ENCODE measurements at regions of chr11 and their contacts with region 1.

Region 1: DNA sequence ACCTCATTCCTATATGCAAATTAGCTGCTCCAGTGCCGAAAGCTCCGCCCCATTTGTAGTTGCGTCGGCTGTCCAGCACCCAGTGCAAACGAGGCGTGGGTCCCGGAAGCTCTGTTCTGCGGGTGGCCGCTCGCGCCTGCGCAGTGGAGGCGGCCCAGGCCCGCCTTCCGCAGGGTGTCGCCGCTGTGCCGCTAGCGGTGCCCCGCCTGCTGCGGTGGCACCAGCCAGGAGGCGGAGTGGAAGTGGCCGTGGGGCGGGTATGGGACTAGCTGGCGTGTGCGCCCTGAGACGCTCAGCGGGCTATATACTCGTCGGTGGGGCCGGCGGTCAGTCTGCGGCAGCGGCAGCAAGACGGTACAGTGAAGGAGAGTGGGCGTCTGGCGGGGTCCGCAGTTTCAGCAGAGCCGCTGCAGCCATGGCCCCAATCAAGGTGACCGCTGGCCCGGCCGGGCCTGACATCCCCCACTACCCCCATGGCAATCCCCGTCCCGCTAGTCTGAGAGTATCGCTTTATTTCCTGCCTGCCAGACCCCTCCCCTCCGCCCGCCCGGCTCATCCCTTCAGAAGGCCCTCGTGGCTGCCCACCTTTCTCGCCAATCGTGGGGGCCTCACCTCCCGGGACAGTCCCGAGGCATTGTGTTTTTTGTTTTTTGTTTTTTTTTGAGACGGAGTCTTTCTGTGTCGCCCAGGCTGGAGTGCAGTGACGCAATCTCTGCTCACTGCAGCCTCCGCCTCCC is at the start of gene PRDX5:
- DNase-seq: peak; percentile 97
- H3K4me3 Mint-ChIP-seq: peak within 1 kb of the TSS; percentile 98
- H3K27ac Mint-ChIP-seq: peak within 1 kb of the TSS; percentile 99
- H3K4me1 Mint-ChIP-seq: peaks cover 29% of the 10 kb centered on the region
- H3K27me3 Mint-ChIP-seq: no peaks in the 10 kb centered on the region
- CTCF ChIP-seq: no peak
- total RNA-seq, gene PRDX5: 165 TPM in 2 replicates

Region 2: GRCh38 chr11:64074239-64074638 is 243.9 kb before region 1 on chr11:
- CTCF ChIA-PET with region 1: no interaction called
- intact Hi-C with region 1: no loop called
- DNase-seq: no peak
- H3K4me3 Mint-ChIP-seq: no peak overlapping the region
- H3K27ac Mint-ChIP-seq: no peak overlapping the region
- H3K4me1 Mint-ChIP-seq: no peaks in the 10 kb centered on the region
- H3K27me3 Mint-ChIP-seq: peaks cover 3% of the 10 kb centered on the region
- CTCF ChIP-seq: no peak

Region 3: DNA sequence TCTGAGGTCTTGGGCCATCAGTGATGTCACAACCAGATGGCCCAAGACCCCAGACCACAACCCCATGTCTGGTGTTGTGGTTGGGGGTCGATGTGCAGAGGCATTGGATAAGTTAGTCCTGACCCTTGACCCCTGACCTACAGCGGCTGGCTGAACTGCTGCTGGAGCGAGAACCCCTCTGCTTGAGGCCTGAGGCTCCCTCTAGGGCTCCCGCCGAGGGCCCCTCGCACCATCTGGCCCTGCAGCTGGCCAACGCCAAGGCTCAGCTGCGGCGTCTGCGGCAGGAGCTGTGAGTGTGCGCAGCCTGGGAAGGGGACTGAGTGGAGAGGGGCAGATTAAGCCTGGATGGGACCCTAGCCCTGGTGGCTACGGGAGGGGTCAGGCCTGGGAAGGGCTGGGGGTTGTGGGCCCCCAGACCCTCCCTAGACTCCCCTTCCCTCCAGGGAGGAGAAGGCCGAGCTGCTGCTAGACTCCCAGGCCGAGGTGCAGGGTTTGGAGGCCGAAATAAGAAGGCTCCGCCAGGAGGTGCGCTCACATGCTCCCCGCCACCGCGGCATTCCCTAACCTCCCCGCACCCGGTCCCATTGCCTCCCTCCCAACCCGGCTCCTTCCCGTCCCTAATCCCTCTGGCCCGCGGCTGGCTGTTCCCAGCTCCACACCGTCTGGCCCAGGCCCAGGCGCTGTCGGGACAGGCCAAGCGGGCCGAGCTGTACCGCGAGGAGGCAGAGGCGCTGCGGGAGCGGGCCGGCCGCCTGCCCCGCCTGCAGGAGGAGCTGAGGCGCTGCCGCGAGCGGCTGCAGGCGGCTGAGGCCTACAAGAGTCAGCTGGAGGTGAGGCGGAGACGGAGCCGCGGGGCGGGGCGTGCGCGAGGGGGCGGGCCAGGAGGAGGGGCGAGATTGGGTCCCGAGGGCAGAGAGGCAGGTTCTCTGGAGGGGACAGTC is 24.0 kb after region 1 on chr11:
- CTCF ChIA-PET with region 1: interaction called, 27 read pairs
- intact Hi-C with region 1: no loop called
- DNase-seq: peak; percentile 96
- H3K4me3 Mint-ChIP-seq: peak overlapping the region; percentile 52
- H3K27ac Mint-ChIP-seq: no peak overlapping the region
- H3K4me1 Mint-ChIP-seq: peaks cover 3% of the 10 kb centered on the region
- H3K27me3 Mint-ChIP-seq: no peaks in the 10 kb centered on the region
- CTCF ChIP-seq: peak; percentile 36

Region 4: GRCh38 chr11:65945430-65945911 is 1627.3 kb after region 1 on chr11 and contains the start of gene TSGA10IP:
- CTCF ChIA-PET with region 1: no interaction called
- intact Hi-C with region 1: no loop called
- DNase-seq: no peak
- H3K4me3 Mint-ChIP-seq: no peak within 1 kb of the TSS
- H3K27ac Mint-ChIP-seq: no peak within 1 kb of the TSS
- H3K4me1 Mint-ChIP-seq: no peaks in the 10 kb centered on the region
- H3K27me3 Mint-ChIP-seq: peaks cover 39% of the 10 kb centered on the region
- CTCF ChIP-seq: no peak
- total RNA-seq, gene TSGA10IP: not detected in 2 replicates

Measured in Calu3 (cell line).